Activated T-helper 1 cell treated with anti-CD3 and anti-CD28 coated beads, Interleukin-12 subunit alpha, Interleukin-12 subunit beta, Interleukin-2, Interleukin-4 antibody, amounts not matched to agents 30 ng/mL and 10 ng/mL and 1 ng/mL, durations not matched to agents 14 hours and 24 hours and 36 hours (primary cell): ENCODE measurements at regions of chrX and their contacts with region 1.

Region 1: DNA sequence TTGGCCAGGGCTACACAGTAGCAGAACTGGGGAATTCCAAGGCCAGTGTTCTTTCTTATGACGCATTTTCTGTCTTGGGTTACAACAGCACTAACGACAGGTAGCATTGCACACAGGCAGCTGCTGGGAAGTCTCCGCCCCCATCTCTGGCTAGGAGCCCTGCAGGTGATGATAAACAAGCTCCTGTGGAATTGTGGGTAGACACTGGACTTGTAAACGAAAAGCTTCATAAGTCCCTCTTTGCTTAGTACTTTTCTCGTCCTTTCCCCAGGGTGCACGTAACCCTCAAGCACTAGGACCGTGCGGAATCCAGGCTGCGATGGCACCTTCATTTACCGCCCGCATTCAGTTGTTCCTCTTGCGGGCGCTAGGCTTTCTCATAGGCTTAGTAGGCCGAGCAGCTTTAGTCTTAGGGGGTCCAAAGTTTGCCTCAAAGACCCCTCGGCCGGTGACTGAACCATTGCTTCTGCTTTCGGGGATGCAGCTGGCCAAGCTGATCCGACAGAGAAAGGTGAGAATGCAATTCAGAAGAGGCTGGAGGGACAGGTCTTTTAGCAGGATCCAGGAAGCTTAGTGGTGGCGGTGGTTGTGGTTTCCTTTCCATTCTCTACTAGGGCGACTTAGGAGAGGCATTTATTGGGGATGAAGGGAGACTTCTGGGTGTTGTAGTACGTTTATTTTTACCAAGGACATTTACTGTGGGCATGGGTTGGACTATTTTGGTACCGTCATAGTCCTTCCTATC is at the start of gene FAAH2:
- DNase-seq: peak; percentile 65
- H3K4me3 Mint-ChIP-seq: peak within 1 kb of the TSS; percentile 88
- H3K27ac Mint-ChIP-seq: peak within 1 kb of the TSS; percentile 94
- H3K4me1 Mint-ChIP-seq: peaks cover 68% of the 10 kb centered on the region
- H3K27me3 Mint-ChIP-seq: no peaks in the 10 kb centered on the region
- total RNA-seq, gene FAAH2: 7.2 and 7.3 TPM in 2 replicates

Region 2: GRCh38 chrX:56813318-56813837 is 473.3 kb before region 1 on chrX:
- intact Hi-C with region 1: loop called (anchors 2 kb)
- DNase-seq: peak; percentile 32
- H3K4me3 Mint-ChIP-seq: peak overlapping the region; percentile 80
- H3K27ac Mint-ChIP-seq: peak overlapping the region; percentile 97
- H3K4me1 Mint-ChIP-seq: peaks cover 38% of the 10 kb centered on the region
- H3K27me3 Mint-ChIP-seq: no peaks in the 10 kb centered on the region

Region 3: GRCh38 chrX:57121162-57121741 is 165.4 kb before region 1 on chrX and contains the start of gene SPIN2B:
- intact Hi-C with region 1: loop called (anchors 5 kb)
- DNase-seq: peak; percentile 72
- H3K4me3 Mint-ChIP-seq: peak within 1 kb of the TSS; percentile 91
- H3K27ac Mint-ChIP-seq: peak within 1 kb of the TSS; percentile 84
- H3K4me1 Mint-ChIP-seq: peaks cover 7% of the 10 kb centered on the region
- H3K27me3 Mint-ChIP-seq: no peaks in the 10 kb centered on the region
- total RNA-seq, gene SPIN2B: 12.1 and 12.7 TPM in 2 replicates

Region 4: DNA sequence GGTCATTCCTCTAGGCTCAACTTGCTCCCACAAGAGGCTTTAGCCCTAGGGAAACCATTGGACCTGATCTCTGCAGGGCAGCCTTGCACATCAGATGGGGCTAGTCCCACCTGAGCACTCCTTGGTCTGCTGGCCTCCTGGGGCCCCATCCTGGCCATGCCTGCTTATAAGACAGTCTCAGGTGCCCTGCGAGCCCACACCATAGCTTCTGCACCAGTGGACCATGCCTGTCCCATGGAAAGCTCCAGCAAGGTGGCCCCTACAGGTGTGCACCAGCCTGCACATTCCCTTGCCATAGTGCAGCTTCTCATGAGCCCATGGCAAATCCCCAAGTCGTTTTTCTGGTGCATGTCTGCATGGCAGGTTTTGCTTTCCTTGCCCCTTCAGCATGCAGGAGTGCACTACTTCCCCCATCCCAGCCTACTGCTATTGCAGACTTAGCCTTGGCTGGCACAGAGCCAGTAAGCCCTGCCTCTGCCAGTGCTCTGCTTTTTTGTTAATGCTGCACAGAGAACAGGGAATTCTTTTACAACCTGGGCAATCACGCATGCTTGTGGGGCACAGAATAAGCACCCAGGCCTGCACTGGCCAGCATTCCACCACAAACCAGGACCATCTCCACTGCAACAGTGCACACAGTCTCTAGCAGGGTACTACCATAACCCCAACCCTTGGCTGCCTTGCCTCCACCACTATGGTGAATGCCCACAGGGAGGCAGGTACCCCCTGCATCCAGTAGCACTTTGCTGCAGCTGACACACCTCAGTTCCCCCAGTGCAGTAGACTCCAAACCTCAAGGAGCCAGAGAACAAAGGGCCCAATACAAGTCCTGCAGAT is 19.6 kb before region 1 on chrX:
- intact Hi-C with region 1: no loop called
- DNase-seq: no peak
- H3K4me3 Mint-ChIP-seq: no peak overlapping the region
- H3K27ac Mint-ChIP-seq: no peak overlapping the region
- H3K4me1 Mint-ChIP-seq: no peaks in the 10 kb centered on the region
- H3K27me3 Mint-ChIP-seq: no peaks in the 10 kb centered on the region

Region 5: GRCh38 chrX:57367649-57368048 is 81.0 kb after region 1 on chrX:
- intact Hi-C with region 1: loop called (anchors 1 kb)
- DNase-seq: no peak
- H3K4me3 Mint-ChIP-seq: no peak overlapping the region
- H3K27ac Mint-ChIP-seq: no peak overlapping the region
- H3K4me1 Mint-ChIP-seq: peaks cover 20% of the 10 kb centered on the region
- H3K27me3 Mint-ChIP-seq: no peaks in the 10 kb centered on the region

Region 6: DNA sequence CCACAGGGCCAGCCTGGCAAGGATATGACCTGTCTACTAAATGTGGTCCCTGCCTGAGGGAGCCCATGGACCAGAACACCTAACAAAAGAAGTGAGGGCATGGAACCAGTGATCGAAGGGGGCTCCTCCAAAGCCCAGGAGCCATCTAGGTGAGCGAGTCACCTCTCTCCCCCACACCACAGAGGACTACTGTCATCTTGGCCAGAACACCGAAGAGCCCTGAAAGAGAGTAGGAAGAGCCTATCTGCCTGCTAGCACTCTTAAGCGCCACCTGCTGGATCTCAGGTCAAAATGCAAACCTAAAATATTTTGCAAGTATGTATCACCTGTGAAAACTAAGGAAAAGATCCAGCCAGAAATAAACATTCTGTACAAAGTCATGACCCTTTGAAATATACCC is 167.2 kb after region 1 on chrX:
- intact Hi-C with region 1: loop called (anchors 1 kb)
- DNase-seq: peak; percentile 0
- H3K4me3 Mint-ChIP-seq: no peak overlapping the region
- H3K27ac Mint-ChIP-seq: peak overlapping the region; percentile 23
- H3K4me1 Mint-ChIP-seq: peaks cover 6% of the 10 kb centered on the region
- H3K27me3 Mint-ChIP-seq: no peaks in the 10 kb centered on the region

Region 7: DNA sequence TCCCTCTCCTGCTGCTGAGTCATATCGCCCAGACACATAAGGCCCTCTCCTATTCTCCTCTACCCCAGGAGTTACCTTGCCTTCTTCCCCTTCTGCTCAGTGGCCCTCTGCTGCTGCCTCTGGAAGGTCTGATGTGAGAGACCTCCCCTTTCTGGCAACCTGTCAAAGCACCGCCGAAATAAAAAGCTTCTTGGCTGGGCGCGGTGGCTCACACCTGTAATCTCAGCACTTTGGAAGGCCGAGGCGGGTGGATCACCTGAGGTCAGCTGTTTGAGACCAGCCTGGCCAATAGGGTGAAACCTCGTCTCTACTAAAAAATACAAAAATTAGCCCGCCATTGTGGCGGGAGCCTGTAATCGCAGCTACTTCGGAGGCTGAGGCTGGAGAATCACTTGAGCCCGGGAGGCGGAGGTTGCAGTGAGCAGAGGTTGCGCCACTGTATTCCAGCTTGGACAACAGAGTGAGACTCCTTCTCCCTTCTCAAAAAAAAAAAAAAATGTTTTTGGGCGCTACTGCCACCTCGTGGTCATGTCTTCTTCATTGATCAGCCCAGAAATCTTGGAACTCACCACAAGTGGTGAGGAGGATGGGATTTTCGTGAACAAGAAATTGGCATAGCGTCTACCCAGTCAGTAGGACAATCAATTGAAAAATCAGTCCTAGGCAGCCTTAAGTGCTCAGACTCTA is 632.2 kb after region 1 on chrX:
- intact Hi-C with region 1: loop called (anchors 5 kb)
- DNase-seq: no peak
- H3K4me3 Mint-ChIP-seq: no peak overlapping the region
- H3K27ac Mint-ChIP-seq: no peak overlapping the region
- H3K4me1 Mint-ChIP-seq: no peaks in the 10 kb centered on the region
- H3K27me3 Mint-ChIP-seq: no peaks in the 10 kb centered on the region